H1 (cell line): ENCODE measurements at regions of chr11 and their contacts with region 1.

Region 1: GRCh38 chr11:60634126-60634525 is 65.3 kb upstream of the MS4A8 start:
- DNase-seq: peak in 1 of 2 experiments; percentile 66
- H3K4me3 ChIP-seq: no peak overlapping the region
- H3K27ac ChIP-seq: no peak overlapping the region
- H3K4me1 ChIP-seq: no peaks in the 10 kb centered on the region
- H3K27me3 ChIP-seq: no peaks in the 10 kb centered on the region
- CTCF ChIP-seq: peak; percentile 62 to 86 (median 65)
- EP300 ChIP-seq: no peak
- POLR2A ChIP-seq: no peak
- RAD21 ChIP-seq: peak; percentile 82 to 86

Region 2: GRCh38 chr11:60251485-60252212 is 382.5 kb before region 1 on chr11:
- CTCF ChIA-PET with region 1: interaction called, 11 read pairs
- POLR2A ChIA-PET with region 1: no interaction called
- DNase-seq: no peak
- H3K4me3 ChIP-seq: no peak overlapping the region
- H3K27ac ChIP-seq: no peak overlapping the region
- H3K4me1 ChIP-seq: no peaks in the 10 kb centered on the region
- H3K27me3 ChIP-seq: no peaks in the 10 kb centered on the region
- CTCF ChIP-seq: peak in 2 of 3 experiments; percentile 64; a peak in 3 of 4 replicates
- EP300 ChIP-seq: no peak
- POLR2A ChIP-seq: no peak
- RAD21 ChIP-seq: peak; percentile 76 to 82

Region 3: DNA sequence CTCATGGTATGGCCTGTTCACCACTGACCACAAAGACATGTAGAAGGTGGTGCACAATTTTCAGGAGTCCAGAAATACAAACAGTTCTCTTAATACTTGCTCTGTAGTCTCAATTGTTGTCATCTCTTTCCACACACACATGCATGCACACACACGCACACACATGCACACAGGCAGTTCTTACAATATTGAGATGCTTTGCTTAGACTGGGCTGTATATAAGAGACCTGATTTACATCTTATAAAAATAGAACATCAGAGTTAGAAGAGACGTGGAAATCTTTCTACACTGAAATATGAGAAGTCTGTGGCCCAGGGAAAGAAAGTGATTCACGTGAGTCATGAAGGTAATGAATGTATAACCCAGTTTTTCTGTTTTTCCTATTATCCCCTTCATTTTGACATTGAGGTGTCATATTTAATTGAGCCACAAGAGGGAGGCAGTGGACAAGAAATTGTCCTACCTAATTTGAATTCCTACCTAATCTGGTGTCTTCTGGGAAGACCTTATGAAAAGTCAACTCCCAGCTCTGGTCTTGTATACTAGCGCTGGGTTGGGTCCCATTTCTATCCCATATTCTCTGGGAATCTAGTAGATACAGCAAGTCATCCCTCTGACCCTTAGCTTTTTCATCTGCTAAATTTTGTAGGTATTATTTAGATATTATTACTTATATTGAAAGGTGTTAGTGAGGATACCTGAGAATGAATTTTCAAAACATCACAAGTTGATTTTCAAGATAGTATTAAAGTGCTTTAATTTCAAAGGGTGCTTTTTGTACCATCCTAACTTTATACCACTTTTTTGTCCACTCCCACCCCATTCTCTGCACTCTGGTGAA is 368.5 kb before region 1 on chr11:
- CTCF ChIA-PET with region 1: interaction called, 36 read pairs
- POLR2A ChIA-PET with region 1: no interaction called
- DNase-seq: no peak
- H3K4me3 ChIP-seq: no peak overlapping the region
- H3K27ac ChIP-seq: no peak overlapping the region
- H3K4me1 ChIP-seq: peaks cover 0 to 3% (median 0%) of the 10 kb centered on the region in 4 experiments; a peak in 1 of 7 replicates
- H3K27me3 ChIP-seq: no peaks in the 10 kb centered on the region; a peak in 1 of 7 replicates
- CTCF ChIP-seq: peak in 2 of 3 experiments; percentile 60 to 66; a peak in 3 of 4 replicates
- EP300 ChIP-seq: no peak
- POLR2A ChIP-seq: no peak
- RAD21 ChIP-seq: peak; percentile 92

Region 4: GRCh38 chr11:60334005-60334620 is 300.0 kb before region 1 on chr11:
- CTCF ChIA-PET with region 1: interaction called, 12 read pairs
- POLR2A ChIA-PET with region 1: no interaction called
- DNase-seq: peak; percentile 50 to 94
- H3K4me3 ChIP-seq: no peak overlapping the region
- H3K27ac ChIP-seq: no peak overlapping the region
- H3K4me1 ChIP-seq: no peaks in the 10 kb centered on the region; a peak in 2 of 7 replicates
- H3K27me3 ChIP-seq: no peaks in the 10 kb centered on the region
- CTCF ChIP-seq: peak; percentile 27 to 75 (median 72)
- EP300 ChIP-seq: no peak
- POLR2A ChIP-seq: no peak
- RAD21 ChIP-seq: peak; percentile 48 to 65; a peak in 3 of 4 replicates

Region 5: GRCh38 chr11:60363542-60364510 is 270.3 kb before region 1 on chr11:
- CTCF ChIA-PET with region 1: interaction called, 48 read pairs
- POLR2A ChIA-PET with region 1: no interaction called
- DNase-seq: peak in 1 of 2 experiments; percentile 77
- H3K4me3 ChIP-seq: peak overlapping the region in 1 of 4 experiments; percentile 38; a peak in 1 of 8 replicates
- H3K27ac ChIP-seq: peak overlapping the region; percentile 45; the same call in 1 of the 2 replicates
- H3K4me1 ChIP-seq: peaks cover 0 to 15% (median 4%) of the 10 kb centered on the region in 4 experiments; a peak in 4 of 7 replicates
- H3K27me3 ChIP-seq: no peaks in the 10 kb centered on the region
- CTCF ChIP-seq: peak in 2 of 3 experiments; percentile 73 to 87; a peak in 3 of 4 replicates
- EP300 ChIP-seq: no peak
- POLR2A ChIP-seq: no peak
- RAD21 ChIP-seq: peak; percentile 78 to 85

Region 6: GRCh38 chr11:60609632-60610031 is 24.5 kb before region 1 on chr11:
- CTCF ChIA-PET with region 1: interaction called, 13 read pairs
- POLR2A ChIA-PET with region 1: no interaction called
- DNase-seq: no peak
- H3K4me3 ChIP-seq: no peak overlapping the region
- H3K27ac ChIP-seq: no peak overlapping the region
- H3K4me1 ChIP-seq: no peaks in the 10 kb centered on the region
- H3K27me3 ChIP-seq: no peaks in the 10 kb centered on the region
- CTCF ChIP-seq: no peak
- EP300 ChIP-seq: no peak
- POLR2A ChIP-seq: no peak
- RAD21 ChIP-seq: no peak

Region 7: GRCh38 chr11:60699284-60699691 is 65.2 kb after region 1 on chr11 and contains the start of gene MS4A8:
- CTCF ChIA-PET with region 1: no interaction called
- POLR2A ChIA-PET with region 1: no interaction called
- DNase-seq: no peak
- H3K4me3 ChIP-seq: no peak within 1 kb of the TSS
- H3K27ac ChIP-seq: no peak within 1 kb of the TSS
- H3K4me1 ChIP-seq: peaks cover 0 to 2% (median 0%) of the 10 kb centered on the region in 4 experiments; a peak in 3 of 7 replicates
- H3K27me3 ChIP-seq: no peaks in the 10 kb centered on the region
- CTCF ChIP-seq: no peak
- EP300 ChIP-seq: no peak
- POLR2A ChIP-seq: no peak
- RAD21 ChIP-seq: no peak
- total RNA-seq, gene MS4A8: not detected in 2 replicates